ENCODE measurements at regions of chr2 and their contacts with region 1.

Region 1: DNA sequence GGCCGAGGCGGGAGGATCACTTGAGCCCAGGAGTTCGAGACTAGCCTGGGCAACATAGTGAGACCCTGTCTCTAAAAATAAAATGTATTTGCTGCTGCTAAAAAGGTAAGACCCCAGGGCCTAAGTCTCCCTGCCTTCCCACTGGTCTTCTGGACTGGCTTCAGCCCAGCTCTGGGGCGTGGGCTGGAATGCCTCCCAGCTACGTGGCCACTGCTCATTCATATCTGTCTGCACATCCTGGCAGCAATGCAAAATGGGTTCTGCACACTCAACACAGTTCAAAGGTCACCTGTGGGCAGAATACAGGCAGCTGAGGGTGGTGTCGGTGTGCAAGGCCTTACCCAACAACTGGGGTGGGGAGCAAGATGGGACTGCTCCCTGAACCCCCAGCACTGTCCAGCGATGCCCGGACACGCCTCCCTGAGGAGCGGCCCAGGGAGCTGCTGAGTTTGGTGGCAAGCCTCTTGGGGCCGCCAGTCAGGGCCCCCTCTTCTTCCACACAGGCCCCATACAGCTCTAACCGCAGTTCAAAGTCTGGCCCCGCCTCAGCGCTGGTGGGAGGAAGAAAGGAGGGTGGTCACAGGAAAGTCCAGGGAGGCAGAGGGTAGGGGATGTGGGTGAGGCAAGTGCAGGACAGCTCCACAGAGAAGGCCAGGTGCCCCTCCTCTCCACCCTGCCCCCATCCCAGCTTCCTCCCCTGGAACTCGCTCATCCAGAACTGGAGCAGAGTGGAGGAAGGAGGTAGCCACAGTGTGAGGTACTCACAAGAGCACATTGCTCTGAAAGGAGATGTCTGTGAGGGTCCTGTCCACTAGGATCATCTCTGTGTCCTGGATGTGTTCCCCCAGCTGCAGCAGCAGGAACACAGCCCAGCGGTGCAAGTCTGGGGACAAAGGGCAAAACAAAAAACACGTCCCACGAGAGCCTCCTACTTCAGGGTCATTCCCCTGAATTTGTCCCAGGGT is 8.2 kb downstream of the WDR54 start:
- DNase-seq: peak; percentile 95
- ATAC-seq: peak; percentile 79
- H3K4me3 ChIP-seq: peak overlapping the region in 1 of 3 experiments; percentile 41; a peak in 2 of 6 replicates
- H3K27ac ChIP-seq: peak overlapping the region; percentile 80
- H3K4me1 ChIP-seq: peaks cover 79% of the 10 kb centered on the region
- H3K27me3 ChIP-seq: no peaks in the 10 kb centered on the region
- CTCF ChIP-seq: peak; percentile 41
- EP300 ChIP-seq: peak in 1 of 2 experiments; percentile 61; a peak in 2 of 4 replicates
- POLR2A ChIP-seq: peak; percentile 52 to 53; a peak in 3 of 4 replicates
- RAD21 ChIP-seq: peak; percentile 48; the same call in 1 of the 2 replicates

Region 2: DNA sequence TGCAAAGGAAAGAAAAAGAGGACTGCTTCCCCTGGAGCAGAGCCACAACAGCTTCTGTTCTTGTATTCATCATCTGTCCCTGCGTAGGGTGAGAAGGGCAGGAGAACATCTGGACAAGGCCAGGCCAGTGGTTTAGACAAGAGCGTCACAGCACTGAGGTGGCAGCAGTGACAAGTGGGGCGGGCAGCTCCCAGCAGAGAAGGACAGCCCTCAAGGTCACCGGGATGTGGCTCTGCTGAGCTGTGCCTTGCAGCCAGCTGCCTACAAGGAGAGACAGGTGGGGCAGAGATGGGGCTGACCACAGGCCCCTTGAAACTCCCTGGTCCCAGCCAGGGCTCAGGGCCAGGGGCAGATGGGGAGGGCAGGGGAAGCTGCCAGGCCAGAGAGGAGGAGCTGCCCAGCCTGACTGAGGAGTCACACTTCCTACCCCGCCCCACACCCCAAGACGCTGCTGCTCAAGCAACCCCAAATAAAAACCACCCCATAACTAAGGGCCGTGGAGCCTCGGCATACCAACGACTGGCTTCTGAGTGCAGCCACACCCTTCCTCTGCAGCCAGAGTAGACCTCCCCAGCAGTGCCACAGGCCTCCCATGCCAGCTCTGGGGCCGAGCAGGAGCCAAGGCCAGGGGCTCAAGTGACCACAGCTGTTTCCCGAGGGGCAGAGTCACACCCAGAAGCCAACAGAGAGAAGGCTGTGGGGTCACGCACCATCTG is 1322.4 kb before region 1 on chr2:
- CTCF ChIA-PET with region 1: no interaction called
- POLR2A ChIA-PET with region 1: no interaction called
- in situ Hi-C with region 1: no loop called
- intact Hi-C with region 1: no loop called
- DNase-seq: no peak
- ATAC-seq: peak; percentile 59
- H3K4me3 ChIP-seq: no peak overlapping the region; a peak in 1 of 6 replicates
- H3K27ac ChIP-seq: no peak overlapping the region
- H3K4me1 ChIP-seq: peaks cover 57% of the 10 kb centered on the region
- H3K27me3 ChIP-seq: no peaks in the 10 kb centered on the region; a peak in 1 of 5 replicates
- CTCF ChIP-seq: peak; percentile 61
- EP300 ChIP-seq: no peak
- POLR2A ChIP-seq: no peak
- RAD21 ChIP-seq: no peak

Region 3: GRCh38 chr2:74413001-74413698 is 16.6 kb before region 1 on chr2:
- CTCF ChIA-PET with region 1: no interaction called
- POLR2A ChIA-PET with region 1: interaction called, 17 read pairs
- in situ Hi-C with region 1: no loop called
- intact Hi-C with region 1: no loop called
- DNase-seq: peak; percentile 78
- ATAC-seq: peak; percentile 84
- H3K4me3 ChIP-seq: peak overlapping the region in 2 of 3 experiments; percentile 2 to 63; a peak in 2 of 6 replicates
- H3K27ac ChIP-seq: peak overlapping the region; percentile 13
- H3K4me1 ChIP-seq: peaks cover 27% of the 10 kb centered on the region
- H3K27me3 ChIP-seq: peaks cover 0 to 9% of the 10 kb centered on the region in 2 experiments; a peak in 3 of 5 replicates
- CTCF ChIP-seq: no peak; the same call in 1 of the 2 replicates
- EP300 ChIP-seq: 0 out of 4 replicates have a peak, but pooled peaks of 1 of the 2 experiments have one; percentile 23
- POLR2A ChIP-seq: no peak
- RAD21 ChIP-seq: no peak

Region 4: DNA sequence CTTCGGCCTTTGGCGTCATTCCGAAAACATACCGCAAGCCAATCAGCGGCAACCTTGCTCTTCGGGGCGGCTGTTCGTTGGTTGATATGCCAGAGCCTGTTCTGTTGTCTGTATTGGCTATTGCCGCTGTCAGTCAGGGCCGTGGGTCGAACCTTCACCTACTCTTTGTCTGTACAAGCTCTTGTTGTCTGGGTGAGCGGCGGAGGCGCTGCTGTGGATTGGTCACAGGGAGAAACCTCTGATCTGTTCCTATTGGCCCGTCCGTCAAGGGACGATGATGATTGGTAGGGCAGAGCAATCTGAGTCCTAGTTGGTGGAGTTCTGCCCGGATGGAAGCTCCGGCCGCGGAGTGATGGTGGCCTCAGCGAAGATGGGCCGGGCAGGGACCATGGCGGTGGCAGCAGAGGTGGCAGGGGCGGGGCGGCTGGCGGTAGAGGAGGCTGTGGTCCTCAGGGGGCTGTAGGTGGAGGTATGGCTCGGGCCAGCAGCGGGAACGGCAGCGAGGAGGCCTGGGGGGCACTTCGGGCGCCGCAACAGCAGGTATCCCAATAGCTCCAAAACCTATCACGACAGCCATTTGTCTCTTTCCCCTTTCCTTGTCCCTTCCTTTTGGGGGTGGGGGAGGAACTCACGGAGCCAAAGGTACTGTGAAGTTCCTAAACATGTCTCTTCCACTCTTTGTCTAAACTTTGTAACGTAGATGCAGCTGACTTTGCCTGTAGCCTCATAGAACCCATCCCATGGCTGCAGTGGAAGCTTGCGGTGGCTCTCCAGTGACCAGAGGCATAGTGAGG is 28.6 kb after region 1 on chr2 and contains the start of gene WBP1:
- CTCF ChIA-PET with region 1: no interaction called
- POLR2A ChIA-PET with region 1: interaction called, 116 read pairs
- in situ Hi-C with region 1: no loop called
- intact Hi-C with region 1: no loop called
- DNase-seq: peak; percentile 100
- ATAC-seq: peak; percentile 92
- H3K4me3 ChIP-seq: peak within 1 kb of the TSS; percentile 76 to 92 (median 88)
- H3K27ac ChIP-seq: peak within 1 kb of the TSS; percentile 89
- H3K4me1 ChIP-seq: peaks cover 41% of the 10 kb centered on the region
- H3K27me3 ChIP-seq: no peaks in the 10 kb centered on the region; a peak in 1 of 5 replicates
- CTCF ChIP-seq: no peak
- EP300 ChIP-seq: no peak; a peak in 1 of 4 replicates
- POLR2A ChIP-seq: peak in 1 of 2 experiments; percentile 62; a peak in 2 of 4 replicates
- RAD21 ChIP-seq: 0 out of 2 replicates have a peak, but pooled peaks have one; percentile 26
- total RNA-seq, gene WBP1: 26.5 and 38.8 TPM in 2 replicates

Region 5: DNA sequence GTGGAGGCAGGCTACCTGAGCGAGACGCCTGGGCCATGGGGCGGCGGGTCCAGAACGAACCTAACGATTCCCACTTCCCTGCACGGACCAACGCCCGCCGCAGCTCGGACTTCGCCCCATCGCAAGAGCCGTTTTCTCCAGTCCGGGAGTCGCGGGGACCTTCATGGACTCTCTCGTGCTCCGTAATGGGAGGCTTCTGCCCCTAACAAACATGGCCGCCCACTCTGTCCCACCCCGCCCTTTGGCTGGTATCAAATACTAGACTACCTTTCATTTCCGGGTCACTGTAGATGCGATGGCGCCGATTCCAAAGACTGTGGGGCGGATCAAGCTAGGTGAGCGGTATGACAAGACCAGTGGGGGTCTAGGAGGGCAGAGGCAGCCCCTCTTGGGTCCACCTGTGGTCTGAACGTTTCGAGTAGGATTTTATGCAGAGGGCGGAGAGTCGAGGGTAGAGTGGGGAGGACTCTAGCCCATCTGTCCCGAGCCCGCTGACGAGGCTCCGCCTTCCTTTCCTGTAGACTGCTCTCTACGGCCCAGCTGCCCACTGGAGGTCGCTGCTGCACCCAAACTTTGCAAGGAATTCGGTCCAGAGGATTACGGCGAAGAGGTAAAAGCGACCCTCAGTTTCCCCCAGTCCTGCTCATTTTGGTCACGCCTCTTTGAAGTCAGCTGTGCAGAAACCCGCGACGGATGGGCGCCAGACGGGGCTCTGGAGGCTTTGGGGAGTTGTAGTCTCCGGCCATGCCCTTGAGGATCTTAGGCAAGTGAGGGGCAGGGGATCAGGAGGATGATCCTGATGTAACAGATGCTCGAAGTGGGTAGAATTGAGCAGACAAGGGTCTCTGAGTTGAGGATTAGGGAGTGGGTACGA is 53.3 kb after region 1 on chr2 and contains the starts of genes CCDC142 and TTC31:
- CTCF ChIA-PET with region 1: no interaction called
- POLR2A ChIA-PET with region 1: interaction called, 17 read pairs
- in situ Hi-C with region 1: no loop called
- intact Hi-C with region 1: no loop called
- DNase-seq: peak; percentile 97
- ATAC-seq: peak; percentile 91
- H3K4me3 ChIP-seq: peak within 1 kb of the TSS; percentile 82 to 87 (median 83)
- H3K27ac ChIP-seq: peak within 1 kb of the TSS; percentile 89
- H3K4me1 ChIP-seq: peaks cover 70% of the 10 kb centered on the region
- H3K27me3 ChIP-seq: no peaks in the 10 kb centered on the region; a peak in 1 of 5 replicates
- CTCF ChIP-seq: peak; percentile 99
- EP300 ChIP-seq: 0 out of 4 replicates have a peak, but pooled peaks of 1 of the 2 experiments have one; percentile 31
- POLR2A ChIP-seq: peak; percentile 75 to 89
- RAD21 ChIP-seq: peak; percentile 94
- total RNA-seq, gene CCDC142: 8.8 and 30.4 TPM in 2 replicates
- total RNA-seq, gene TTC31: 21.1 and 28.3 TPM in 2 replicates

Measured in HepG2 (cell line).